OCI-LY7 (cell line): ENCODE measurements at regions of chr1 and their contacts with region 1.

Region 1: GRCh38 chr1:235391874-235392273 is 24.6 kb downstream of the TBCE start:
- DNase-seq: no peak
- H3K4me3 ChIP-seq: no peak overlapping the region
- H3K27ac ChIP-seq: no peak overlapping the region
- H3K4me1 ChIP-seq: no peaks in the 10 kb centered on the region
- CTCF ChIP-seq: no peak

Region 2: GRCh38 chr1:235339746-235340445 is 52.0 kb before region 1 on chr1:
- CTCF ChIA-PET with region 1: no interaction called
- POLR2A ChIA-PET with region 1: no interaction called
- intact Hi-C with region 1: loop called (anchors 5 kb)
- DNase-seq: no peak
- H3K4me3 ChIP-seq: no peak overlapping the region
- H3K27ac ChIP-seq: no peak overlapping the region
- H3K4me1 ChIP-seq: no peaks in the 10 kb centered on the region
- CTCF ChIP-seq: no peak

Region 3: GRCh38 chr1:235486321-235486720 is 94.4 kb after region 1 on chr1:
- CTCF ChIA-PET with region 1: no interaction called
- POLR2A ChIA-PET with region 1: no interaction called
- intact Hi-C with region 1: no loop called
- DNase-seq: no peak
- H3K4me3 ChIP-seq: no peak overlapping the region
- H3K27ac ChIP-seq: no peak overlapping the region
- H3K4me1 ChIP-seq: no peaks in the 10 kb centered on the region
- CTCF ChIP-seq: no peak

Region 4: GRCh38 chr1:235601104-235601503 is 209.2 kb after region 1 on chr1:
- CTCF ChIA-PET with region 1: no interaction called
- POLR2A ChIA-PET with region 1: no interaction called
- intact Hi-C with region 1: no loop called
- DNase-seq: peak; percentile 35
- H3K4me3 ChIP-seq: no peak overlapping the region
- H3K27ac ChIP-seq: no peak overlapping the region
- H3K4me1 ChIP-seq: no peaks in the 10 kb centered on the region
- CTCF ChIP-seq: peak; percentile 80

Region 5: GRCh38 chr1:235648954-235649367 is 257.1 kb after region 1 on chr1:
- CTCF ChIA-PET with region 1: no interaction called
- POLR2A ChIA-PET with region 1: no interaction called
- intact Hi-C with region 1: no loop called
- DNase-seq: no peak
- H3K4me3 ChIP-seq: no peak overlapping the region
- H3K27ac ChIP-seq: no peak overlapping the region
- H3K4me1 ChIP-seq: no peaks in the 10 kb centered on the region
- CTCF ChIP-seq: no peak